ENCODE measurements at regions of chr1 and their contacts with region 1.

Region 1: GRCh38 chr1:25675729-25676476 is 59.3 kb downstream of the MAN1C1 start:
- DNase-seq: peak; percentile 40 to 91 (median 80)
- ATAC-seq: peak; percentile 78 to 90
- H3K4me3 Mint-ChIP-seq: peak overlapping the region; percentile 58 to 91 (median 80)
- H3K27ac Mint-ChIP-seq: peak overlapping the region; percentile 90 to 98 (median 96)
- H3K4me1 Mint-ChIP-seq: peaks cover 59 to 91% (median 89%) of the 10 kb centered on the region in 4 donors
- H3K27me3 Mint-ChIP-seq: no peaks in the 10 kb centered on the region

Region 2: GRCh38 chr1:25580927-25581326 is 95.0 kb before region 1 on chr1:
- POLR2A ChIA-PET with region 1: no interaction called
- DNase-seq: no peak
- ATAC-seq: no peak
- H3K4me3 Mint-ChIP-seq: no peak overlapping the region
- H3K27ac Mint-ChIP-seq: peak overlapping the region in 4 of 10 donors; percentile 40 to 79 (median 58)
- H3K4me1 Mint-ChIP-seq: peaks cover 12 to 21% (median 14%) of the 10 kb centered on the region in 4 donors
- H3K27me3 Mint-ChIP-seq: no peaks in the 10 kb centered on the region

Region 3: GRCh38 chr1:25657121-25657882 is 18.6 kb before region 1 on chr1:
- POLR2A ChIA-PET with region 1: interaction called, 10 read pairs
- DNase-seq: peak in 4 of 10 donors; percentile 18 to 39 (median 28)
- ATAC-seq: peak; percentile 87 to 90
- H3K4me3 Mint-ChIP-seq: peak overlapping the region in 9 of 10 donors; percentile 2 to 67 (median 39)
- H3K27ac Mint-ChIP-seq: peak overlapping the region; percentile 41 to 90 (median 68)
- H3K4me1 Mint-ChIP-seq: peaks cover 27 to 83% (median 51%) of the 10 kb centered on the region in 4 donors
- H3K27me3 Mint-ChIP-seq: no peaks in the 10 kb centered on the region

Region 4: GRCh38 chr1:25697435-25698233 is 21.7 kb after region 1 on chr1:
- POLR2A ChIA-PET with region 1: interaction called, 10 read pairs
- DNase-seq: peak in 9 of 10 donors; percentile 15 to 72 (median 44)
- ATAC-seq: peak; percentile 97 to 98
- H3K4me3 Mint-ChIP-seq: peak overlapping the region in 8 of 10 donors; percentile 4 to 61 (median 29)
- H3K27ac Mint-ChIP-seq: peak overlapping the region; percentile 3 to 87 (median 74)
- H3K4me1 Mint-ChIP-seq: peaks cover 19 to 70% (median 37%) of the 10 kb centered on the region in 4 donors
- H3K27me3 Mint-ChIP-seq: no peaks in the 10 kb centered on the region

Region 5: GRCh38 chr1:25727635-25728330 is 51.9 kb after region 1 on chr1:
- POLR2A ChIA-PET with region 1: no interaction called
- DNase-seq: no peak
- ATAC-seq: no peak
- H3K4me3 Mint-ChIP-seq: peak overlapping the region in 4 of 10 donors; percentile 26 to 65 (median 42)
- H3K27ac Mint-ChIP-seq: peak overlapping the region in 8 of 10 donors; percentile 12 to 70 (median 56)
- H3K4me1 Mint-ChIP-seq: peaks cover 45 to 93% (median 78%) of the 10 kb centered on the region in 4 donors
- H3K27me3 Mint-ChIP-seq: peaks cover 0 to 12% (median 0%) of the 10 kb centered on the region in 5 donors

Region 6: GRCh38 chr1:26083246-26083645 is 407.3 kb after region 1 on chr1:
- POLR2A ChIA-PET with region 1: no interaction called
- DNase-seq: no peak
- ATAC-seq: no peak
- H3K4me3 Mint-ChIP-seq: no peak overlapping the region
- H3K27ac Mint-ChIP-seq: peak overlapping the region in 1 of 10 donors; percentile 24
- H3K4me1 Mint-ChIP-seq: no peaks in the 10 kb centered on the region
- H3K27me3 Mint-ChIP-seq: peaks cover 14 to 27% (median 20%) of the 10 kb centered on the region in 5 donors